ENCODE measurements at regions of chr7 and their contacts with region 1.

Region 1: GRCh38 chr7:5780801-5781496 is 514 bp downstream of the RNF216 start:
- DNase-seq: peak; percentile 42
- ATAC-seq: peak; percentile 50
- H3K4me3 Mint-ChIP-seq: peak overlapping the region; percentile 76
- H3K27ac Mint-ChIP-seq: no peak overlapping the region
- H3K4me1 Mint-ChIP-seq: no peaks in the 10 kb centered on the region
- H3K27me3 Mint-ChIP-seq: no peaks in the 10 kb centered on the region
- CTCF ChIP-seq: no peak

Region 2: GRCh38 chr7:5766321-5766761 is 14.6 kb before region 1 on chr7:
- CTCF ChIA-PET with region 1: interaction called, 34 read pairs
- POLR2A ChIA-PET with region 1: interaction called, 3 read pairs
- DNase-seq: no peak
- ATAC-seq: no peak
- H3K4me3 Mint-ChIP-seq: no peak overlapping the region
- H3K27ac Mint-ChIP-seq: no peak overlapping the region
- H3K4me1 Mint-ChIP-seq: peaks cover 13% of the 10 kb centered on the region
- H3K27me3 Mint-ChIP-seq: no peaks in the 10 kb centered on the region
- CTCF ChIP-seq: no peak

Region 3: GRCh38 chr7:5793361-5794072 is 12.6 kb after region 1 on chr7:
- CTCF ChIA-PET with region 1: interaction called, 12 read pairs
- POLR2A ChIA-PET with region 1: no interaction called
- DNase-seq: no peak
- ATAC-seq: no peak
- H3K4me3 Mint-ChIP-seq: no peak overlapping the region
- H3K27ac Mint-ChIP-seq: no peak overlapping the region
- H3K4me1 Mint-ChIP-seq: peaks cover 6% of the 10 kb centered on the region; the same call in 1 of the 2 replicates
- H3K27me3 Mint-ChIP-seq: peaks cover 4% of the 10 kb centered on the region
- CTCF ChIP-seq: no peak

Region 4: GRCh38 chr7:5822742-5823503 is 42.0 kb after region 1 on chr7:
- CTCF ChIA-PET with region 1: interaction called, 13 read pairs
- POLR2A ChIA-PET with region 1: no interaction called
- DNase-seq: peak; percentile 95
- ATAC-seq: peak; percentile 98
- H3K4me3 Mint-ChIP-seq: peak overlapping the region; percentile 87
- H3K27ac Mint-ChIP-seq: no peak overlapping the region
- H3K4me1 Mint-ChIP-seq: peaks cover 4% of the 10 kb centered on the region
- H3K27me3 Mint-ChIP-seq: peaks cover 4% of the 10 kb centered on the region
- CTCF ChIP-seq: no peak